ENCODE measurements at regions of chr5 and their contacts with region 1.

Region 1: GRCh38 chr5:161713042-161713441 is 27.5 kb downstream of the GABRA6 start:
- DNase-seq: no peak
- H3K4me3 ChIP-seq: no peak overlapping the region
- H3K27ac ChIP-seq: no peak overlapping the region
- H3K4me1 ChIP-seq: no peaks in the 10 kb centered on the region
- H3K27me3 ChIP-seq: no peaks in the 10 kb centered on the region
- CTCF ChIP-seq: no peak

Region 2: GRCh38 chr5:161086461-161086860 is 626.6 kb before region 1 on chr5:
- CTCF ChIA-PET with region 1: no interaction called
- POLR2A ChIA-PET with region 1: no interaction called
- intact Hi-C with region 1: no loop called
- DNase-seq: no peak
- H3K4me3 ChIP-seq: no peak overlapping the region
- H3K27ac ChIP-seq: no peak overlapping the region
- H3K4me1 ChIP-seq: no peaks in the 10 kb centered on the region
- H3K27me3 ChIP-seq: no peaks in the 10 kb centered on the region
- CTCF ChIP-seq: no peak

Region 3: GRCh38 chr5:161757223-161757622 is 44.2 kb after region 1 on chr5:
- CTCF ChIA-PET with region 1: no interaction called
- POLR2A ChIA-PET with region 1: no interaction called
- intact Hi-C with region 1: loop called (anchors 1 kb)
- DNase-seq: no peak
- H3K4me3 ChIP-seq: no peak overlapping the region
- H3K27ac ChIP-seq: no peak overlapping the region
- H3K4me1 ChIP-seq: no peaks in the 10 kb centered on the region
- H3K27me3 ChIP-seq: no peaks in the 10 kb centered on the region
- CTCF ChIP-seq: no peak